Right ventricle myocardium inferior (tissue), 1 donor: ENCODE measurements at regions of chr6 and their contacts with region 1.

Region 1: DNA sequence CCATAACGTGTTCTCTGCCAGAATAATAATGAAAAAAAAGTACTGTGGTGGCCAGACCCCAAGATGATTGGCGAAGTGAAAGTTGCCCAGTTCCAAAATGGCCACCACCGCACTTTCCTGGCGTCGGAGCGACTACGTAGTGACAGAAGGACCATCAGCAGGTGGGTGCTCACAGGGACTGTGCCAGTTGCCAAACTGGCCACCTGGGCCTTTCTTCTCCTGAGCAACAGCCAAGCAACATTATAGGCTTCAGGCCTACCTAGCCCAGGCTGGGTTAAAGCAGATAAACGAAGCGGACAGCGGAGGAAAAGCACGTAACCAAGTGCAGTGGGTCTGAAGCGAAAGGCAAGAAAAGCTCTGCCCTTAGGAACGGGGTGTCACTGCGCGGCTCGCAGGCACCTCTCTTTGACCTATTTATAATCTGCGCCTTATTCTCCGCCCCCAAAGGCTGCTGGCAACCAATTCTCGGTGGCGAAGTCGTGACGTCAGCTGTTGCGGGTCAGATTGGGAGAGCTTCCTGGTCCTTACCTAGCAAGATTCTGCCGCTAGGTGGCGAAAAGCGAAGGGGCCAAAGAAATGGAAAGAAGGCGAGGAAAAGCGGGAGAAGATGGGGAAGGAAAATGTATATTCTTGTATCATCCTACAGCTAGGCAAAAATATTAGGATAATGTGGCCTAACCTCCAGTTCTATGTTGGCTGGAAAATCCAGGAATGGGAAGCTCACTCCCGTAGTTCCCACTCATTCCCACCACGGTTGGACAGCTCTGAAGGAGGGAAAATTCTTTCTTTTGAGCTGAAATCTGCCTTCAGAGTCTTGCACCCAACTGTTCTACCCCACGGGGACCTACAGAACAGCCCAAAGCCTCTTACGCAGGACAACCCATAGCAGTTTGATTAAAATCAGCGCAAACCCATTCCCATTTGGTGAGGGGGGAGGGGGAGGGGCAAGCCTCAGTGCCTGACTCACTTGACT is 6.9 kb upstream of the MOG start:
- DNase-seq: peak; percentile 98
- ATAC-seq: peak; percentile 98

Region 2: DNA sequence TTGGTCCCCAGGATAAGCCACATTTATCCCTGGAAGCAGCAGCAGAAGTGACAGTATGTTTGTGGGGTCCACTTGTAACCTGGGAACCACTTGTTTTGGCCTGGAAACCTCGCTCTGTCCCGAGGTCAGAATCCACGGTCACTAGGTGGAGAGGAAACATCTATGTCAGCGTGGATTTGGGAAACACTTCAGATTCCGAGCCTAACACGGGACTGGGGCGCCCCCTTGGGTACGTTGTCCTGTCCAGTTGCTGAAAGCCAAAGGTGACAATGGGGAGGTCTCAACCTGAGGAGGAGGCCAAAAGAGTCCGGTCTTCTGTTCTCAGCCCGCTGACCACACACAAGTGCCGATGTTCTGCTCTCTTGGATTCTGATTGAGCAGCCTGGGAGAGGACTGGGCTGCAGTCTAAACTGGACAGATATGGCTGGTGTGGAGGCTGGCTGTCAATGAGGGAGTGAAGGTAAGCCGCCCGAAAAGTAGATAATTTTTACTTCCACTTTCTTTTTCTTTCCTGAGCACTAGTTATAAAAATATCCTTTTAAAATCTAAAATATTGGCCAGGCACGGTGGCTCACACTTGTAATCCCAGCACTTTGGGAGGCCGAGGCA is 35.8 kb after region 1 on chr6:
- intact Hi-C with region 1: loop called (anchors 2 kb)
- DNase-seq: no peak
- ATAC-seq: peak; percentile 84